ENCODE measurements at regions of chr16 and their contacts with region 1.

Region 1: GRCh38 chr16:67816240-67817031 is 9.7 kb downstream of the TSNAXIP1 start:
- DNase-seq: no peak
- H3K4me3 ChIP-seq: no peak overlapping the region
- CTCF ChIP-seq: peak; percentile 99

Region 2: DNA sequence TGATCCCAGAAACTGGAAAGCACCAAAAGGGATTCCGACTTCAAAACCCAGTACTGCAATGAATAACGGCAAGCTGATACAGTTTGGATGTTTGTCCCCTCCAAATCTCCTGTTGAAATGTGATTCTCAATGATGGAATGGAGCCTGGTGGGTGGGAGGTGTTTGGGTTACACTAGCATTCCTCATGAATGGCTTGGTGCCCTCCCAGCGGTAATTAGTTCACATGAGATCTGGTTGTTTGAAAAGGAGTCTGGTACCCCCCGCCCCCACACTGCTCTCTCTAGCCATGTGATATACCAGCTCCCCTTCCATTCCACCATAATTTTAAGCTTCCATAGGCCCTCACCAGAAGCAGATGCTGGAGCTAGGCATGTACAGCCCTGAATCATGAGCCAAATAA is 50.1 kb before region 1 on chr16:
- CTCF ChIA-PET with region 1: interaction called, 10 read pairs
- POLR2A ChIA-PET with region 1: no interaction called
- DNase-seq: no peak
- H3K4me3 ChIP-seq: no peak overlapping the region
- CTCF ChIP-seq: no peak

Region 3: DNA sequence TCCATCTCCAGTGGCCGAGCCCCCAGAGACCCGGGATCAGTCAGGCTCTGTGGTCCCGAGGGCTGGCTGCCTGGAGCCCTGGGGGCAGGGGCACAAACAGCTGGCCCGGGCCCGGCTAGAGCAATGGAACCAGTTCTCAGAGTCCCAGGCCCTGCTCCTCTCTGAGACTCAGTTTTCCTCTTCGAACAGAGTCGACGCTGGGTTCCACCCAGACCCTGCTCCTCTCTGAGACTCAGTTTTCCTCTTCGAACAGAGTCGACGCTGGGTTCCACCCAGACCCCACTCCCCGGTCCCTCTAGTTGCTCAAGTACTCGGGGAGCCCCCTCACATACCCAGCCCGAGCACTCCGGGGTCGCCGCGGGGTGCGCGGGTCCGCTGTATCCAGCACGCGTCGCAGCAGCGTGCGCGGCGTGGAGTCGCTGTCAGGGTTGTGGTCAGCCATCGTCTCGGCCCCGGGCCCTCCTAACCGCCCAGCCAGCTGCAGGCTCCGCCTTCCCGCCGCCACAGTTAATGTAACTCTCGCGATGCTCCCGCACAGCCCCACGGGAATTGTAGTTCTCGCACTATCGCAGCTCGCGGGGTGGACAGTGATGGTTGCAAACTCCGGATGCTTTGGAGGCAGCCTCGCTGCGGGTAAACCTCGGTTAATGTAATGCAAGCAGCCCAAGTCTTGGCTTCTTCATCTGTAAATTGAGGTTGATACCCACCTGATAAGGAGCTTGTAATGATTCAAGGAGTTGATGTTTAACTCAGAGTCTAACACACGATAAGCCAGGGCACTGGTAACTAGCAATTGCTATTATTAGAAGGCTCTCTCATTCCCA is 17.2 kb after region 1 on chr16:
- CTCF ChIA-PET with region 1: interaction called, 181 read pairs
- POLR2A ChIA-PET with region 1: interaction called, 5 read pairs
- DNase-seq: no peak
- H3K4me3 ChIP-seq: peak overlapping the region; percentile 83
- CTCF ChIP-seq: no peak

Region 4: GRCh38 chr16:67872786-67873537 is 56.5 kb after region 1 on chr16 and contains the start of gene EDC4:
- CTCF ChIA-PET with region 1: interaction called, 61 read pairs
- POLR2A ChIA-PET with region 1: no interaction called
- DNase-seq: peak; percentile 10
- H3K4me3 ChIP-seq: peak within 1 kb of the TSS; percentile 68
- CTCF ChIP-seq: no peak

Region 5: GRCh38 chr16:67942200-67942509 is 125.7 kb after region 1 on chr16:
- CTCF ChIA-PET with region 1: interaction called, 227 read pairs
- POLR2A ChIA-PET with region 1: no interaction called
- DNase-seq: no peak
- H3K4me3 ChIP-seq: no peak overlapping the region
- CTCF ChIP-seq: peak; percentile 73